CD14-positive monocyte (primary cell): ENCODE measurements at regions of chr3 and their contacts with region 1.

Region 1: DNA sequence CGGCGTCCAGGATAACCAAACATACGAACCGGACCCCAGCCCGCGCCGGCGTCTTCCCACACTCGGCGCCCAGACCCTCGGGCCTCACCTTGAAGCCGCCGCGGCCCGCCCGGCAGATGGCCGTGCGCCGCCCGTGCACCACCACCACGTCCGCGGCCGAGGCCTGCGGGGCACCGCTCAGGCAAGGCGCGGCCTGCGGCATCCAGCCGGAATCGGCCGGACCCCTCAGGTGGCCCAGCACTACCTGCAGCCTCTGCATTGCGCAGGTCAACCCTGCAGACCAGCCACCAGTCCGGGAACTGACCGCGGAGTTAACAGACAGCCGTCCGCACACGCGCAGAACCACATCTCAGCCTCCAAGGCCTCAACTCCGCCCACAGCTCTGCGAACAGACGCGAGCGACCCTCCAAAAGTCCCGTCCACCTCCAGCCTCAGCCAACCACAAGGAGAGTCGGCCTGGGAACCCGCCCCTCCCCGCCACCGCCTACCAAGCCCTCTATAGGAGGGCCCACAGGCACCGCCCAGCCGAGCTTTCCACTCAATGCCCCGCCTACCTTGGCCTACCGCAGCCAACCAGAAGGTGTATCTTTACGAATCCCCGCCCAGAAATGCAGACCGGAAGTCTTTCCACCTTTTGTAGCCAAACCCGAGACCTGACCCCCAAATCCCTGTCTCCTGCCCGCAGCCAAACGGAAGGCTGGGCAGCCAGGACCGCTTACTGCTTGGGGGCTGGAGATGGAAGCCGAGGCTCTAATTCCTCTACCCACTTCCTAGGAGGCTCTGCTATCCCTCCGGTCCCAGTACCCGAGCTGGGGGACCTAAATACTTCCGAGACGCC is at the start of gene ACAA1:
- DNase-seq: peak; percentile 98 to 99 (median 98)
- H3K4me3 ChIP-seq: peak within 1 kb of the TSS; percentile 89 to 99 (median 96)
- H3K4me3 Mint-ChIP-seq: peak within 1 kb of the TSS; percentile 95 to 99
- H3K27ac ChIP-seq: peak within 1 kb of the TSS; percentile 95 to 97
- H3K27ac Mint-ChIP-seq: peak within 1 kb of the TSS; percentile 97 to 100 (median 99)
- H3K4me1 ChIP-seq: peaks cover 50 to 61% of the 10 kb centered on the region in 2 donors
- H3K4me1 Mint-ChIP-seq: peaks cover 74% of the 10 kb centered on the region
- H3K27me3 ChIP-seq: no peaks in the 10 kb centered on the region
- H3K27me3 Mint-ChIP-seq: no peaks in the 10 kb centered on the region
- CTCF ChIP-seq: no peak
- polyA plus RNA-seq, gene ACAA1: 123 to 268 (median 133) TPM

Region 2: GRCh38 chr3:38084334-38085310 is 52.4 kb before region 1 on chr3:
- intact Hi-C with region 1: loop called in 1 of 2 experiments (anchors 10 kb)
- DNase-seq: peak; percentile 14 to 49 (median 26)
- H3K4me3 ChIP-seq: no peak overlapping the region
- H3K4me3 Mint-ChIP-seq: peak overlapping the region in 1 of 2 donors; percentile 48
- H3K27ac ChIP-seq: peak overlapping the region; percentile 20 to 44
- H3K27ac Mint-ChIP-seq: peak overlapping the region; percentile 70 to 90 (median 77)
- H3K4me1 ChIP-seq: no peaks in the 10 kb centered on the region
- H3K4me1 Mint-ChIP-seq: no peaks in the 10 kb centered on the region
- H3K27me3 ChIP-seq: no peaks in the 10 kb centered on the region
- H3K27me3 Mint-ChIP-seq: peaks cover 0 to 8% (median 8%) of the 10 kb centered on the region in 3 donors
- CTCF ChIP-seq: no peak

Region 3: DNA sequence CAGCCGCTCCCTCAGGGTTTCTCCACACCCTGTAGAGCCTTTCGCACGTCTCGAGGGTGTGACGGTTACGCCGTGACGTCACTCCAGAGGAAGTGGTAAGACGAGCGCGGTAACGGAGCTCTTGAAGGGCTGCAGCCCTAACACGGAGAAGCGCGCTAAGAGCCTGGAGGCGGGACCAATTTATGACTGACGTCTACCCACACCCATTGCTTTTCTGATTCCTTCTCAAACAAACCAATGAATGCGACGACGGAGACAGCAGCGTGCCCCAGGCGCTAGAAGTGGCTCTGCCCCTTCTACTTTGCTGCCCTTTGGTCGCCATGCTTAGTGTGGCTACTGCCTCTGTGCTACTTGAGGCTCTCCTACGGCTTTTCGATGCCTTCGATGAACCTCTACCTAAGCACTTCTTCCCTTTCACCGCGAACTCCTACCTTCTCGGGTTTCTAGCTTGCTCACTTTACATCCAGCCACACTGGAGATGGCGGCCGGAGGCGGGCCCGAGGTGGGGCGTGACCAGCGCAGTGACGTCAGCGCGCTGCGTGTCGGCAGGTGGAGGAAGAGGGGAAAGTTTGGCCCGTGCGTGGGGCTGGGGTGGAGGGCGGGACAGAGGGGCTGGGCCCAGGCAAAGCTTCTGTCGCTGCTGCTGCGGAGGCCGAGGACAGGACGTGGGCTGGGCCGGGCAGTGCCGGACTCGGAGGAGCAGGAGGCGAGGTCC is 28.1 kb after region 1 on chr3 and contains the start of gene OXSR1:
- intact Hi-C with region 1: loop called (anchors 1 to 2 kb)
- DNase-seq: peak; percentile 100
- H3K4me3 ChIP-seq: peak within 1 kb of the TSS; percentile 61 to 94 (median 66)
- H3K4me3 Mint-ChIP-seq: peak within 1 kb of the TSS; percentile 93 to 94
- H3K27ac ChIP-seq: peak within 1 kb of the TSS; percentile 96 to 99
- H3K27ac Mint-ChIP-seq: peak within 1 kb of the TSS; percentile 99 to 100 (median 100)
- H3K4me1 ChIP-seq: peaks cover 21 to 40% of the 10 kb centered on the region in 2 donors
- H3K4me1 Mint-ChIP-seq: peaks cover 49% of the 10 kb centered on the region
- H3K27me3 ChIP-seq: no peaks in the 10 kb centered on the region
- H3K27me3 Mint-ChIP-seq: no peaks in the 10 kb centered on the region
- CTCF ChIP-seq: no peak
- polyA plus RNA-seq, gene OXSR1: 9.4 to 20.3 (median 12.3) TPM

Region 4: DNA sequence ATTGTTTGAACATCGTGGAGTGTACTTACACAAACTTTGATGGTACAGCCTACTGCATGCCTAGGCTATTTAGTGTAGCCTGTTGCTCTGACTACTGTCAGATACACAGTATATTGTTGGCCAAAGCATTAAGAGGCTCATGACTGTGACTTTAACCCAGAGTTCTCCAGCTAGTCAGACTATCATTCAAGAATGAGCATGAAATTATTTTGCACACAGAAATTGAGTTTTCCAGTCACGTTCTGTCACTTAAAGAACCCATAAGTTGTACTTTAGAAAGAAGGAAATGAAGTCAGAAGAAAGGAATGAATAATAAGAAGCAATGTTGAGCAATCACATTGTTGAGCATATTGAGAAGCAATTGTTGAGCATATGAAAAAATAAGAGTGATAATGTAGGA is 91.0 kb after region 1 on chr3:
- intact Hi-C with region 1: loop called in 1 of 2 experiments (anchors 10 kb)
- DNase-seq: peak; percentile 7 to 52 (median 24)
- H3K4me3 ChIP-seq: peak overlapping the region in 1 of 3 experiments; percentile 8
- H3K4me3 Mint-ChIP-seq: peak overlapping the region in 1 of 2 donors; percentile 39
- H3K27ac ChIP-seq: peak overlapping the region in 1 of 2 donors; percentile 73
- H3K27ac Mint-ChIP-seq: peak overlapping the region; percentile 41 to 81 (median 61)
- H3K4me1 ChIP-seq: peaks cover 17 to 21% of the 10 kb centered on the region in 2 donors
- H3K4me1 Mint-ChIP-seq: peaks cover 30% of the 10 kb centered on the region
- H3K27me3 ChIP-seq: no peaks in the 10 kb centered on the region
- H3K27me3 Mint-ChIP-seq: no peaks in the 10 kb centered on the region
- CTCF ChIP-seq: no peak

Region 5: GRCh38 chr3:38346587-38347410 is 209.8 kb after region 1 on chr3 and contains the start of gene XYLB:
- intact Hi-C with region 1: loop called in 1 of 2 experiments (anchors 10 kb)
- DNase-seq: peak; percentile 75 to 82 (median 77)
- H3K4me3 ChIP-seq: peak within 1 kb of the TSS; percentile 32 to 78 (median 47)
- H3K4me3 Mint-ChIP-seq: peak within 1 kb of the TSS; percentile 75 to 82
- H3K27ac ChIP-seq: peak within 1 kb of the TSS in 1 of 2 donors; percentile 8
- H3K27ac Mint-ChIP-seq: peak within 1 kb of the TSS in 4 of 7 donors; percentile 9 to 75 (median 41)
- H3K4me1 ChIP-seq: peaks cover 17 to 26% of the 10 kb centered on the region in 2 donors
- H3K4me1 Mint-ChIP-seq: peaks cover 12% of the 10 kb centered on the region
- H3K27me3 ChIP-seq: no peaks in the 10 kb centered on the region
- H3K27me3 Mint-ChIP-seq: peaks cover 0 to 3% (median 1%) of the 10 kb centered on the region in 3 donors
- CTCF ChIP-seq: peak; percentile 85
- polyA plus RNA-seq, gene XYLB: 0.60 to 1.00 (median 0.74) TPM